ENCODE measurements at regions of chr6 and their contacts with region 1.

Region 1: DNA sequence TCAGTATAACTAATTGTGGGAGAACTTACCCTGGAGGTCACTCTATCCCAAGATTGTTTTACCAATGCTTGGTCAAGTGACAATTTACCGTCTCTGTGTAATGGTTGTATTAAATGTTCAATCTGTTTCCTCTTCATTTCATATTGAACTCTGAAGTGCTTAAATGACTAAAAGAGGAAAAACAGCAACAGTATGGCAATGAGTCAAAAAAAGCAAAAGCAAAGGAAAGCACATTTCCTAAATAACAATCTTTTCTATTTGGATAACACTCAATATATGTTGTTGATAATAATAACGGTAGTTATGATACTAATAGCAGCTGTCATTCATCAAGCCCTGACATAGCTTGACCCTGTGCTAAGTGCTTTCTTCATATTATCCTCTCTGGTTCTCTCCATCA is 152.4 kb downstream of the SYNE1 start:
- DNase-seq: no peak

Region 2: GRCh38 chr6:152401978-152402377 is 82.8 kb before region 1 on chr6:
- intact Hi-C with region 1: no loop called
- DNase-seq: no peak

Region 3: GRCh38 chr6:152642989-152643388 is 158.2 kb after region 1 on chr6:
- intact Hi-C with region 1: loop called (anchors 10 kb)
- DNase-seq: peak; percentile 30 to 93 (median 46)